ENCODE measurements at regions of chr5 and their contacts with region 1.

Region 1: GRCh38 chr5:72523960-72524582 is 16.9 kb upstream of the ZNF366 start:
- DNase-seq: no peak
- H3K4me3 ChIP-seq: no peak overlapping the region
- H3K27ac ChIP-seq: no peak overlapping the region
- H3K4me1 ChIP-seq: no peaks in the 10 kb centered on the region
- H3K27me3 ChIP-seq: no peaks in the 10 kb centered on the region
- CTCF ChIP-seq: peak; percentile 42

Region 2: DNA sequence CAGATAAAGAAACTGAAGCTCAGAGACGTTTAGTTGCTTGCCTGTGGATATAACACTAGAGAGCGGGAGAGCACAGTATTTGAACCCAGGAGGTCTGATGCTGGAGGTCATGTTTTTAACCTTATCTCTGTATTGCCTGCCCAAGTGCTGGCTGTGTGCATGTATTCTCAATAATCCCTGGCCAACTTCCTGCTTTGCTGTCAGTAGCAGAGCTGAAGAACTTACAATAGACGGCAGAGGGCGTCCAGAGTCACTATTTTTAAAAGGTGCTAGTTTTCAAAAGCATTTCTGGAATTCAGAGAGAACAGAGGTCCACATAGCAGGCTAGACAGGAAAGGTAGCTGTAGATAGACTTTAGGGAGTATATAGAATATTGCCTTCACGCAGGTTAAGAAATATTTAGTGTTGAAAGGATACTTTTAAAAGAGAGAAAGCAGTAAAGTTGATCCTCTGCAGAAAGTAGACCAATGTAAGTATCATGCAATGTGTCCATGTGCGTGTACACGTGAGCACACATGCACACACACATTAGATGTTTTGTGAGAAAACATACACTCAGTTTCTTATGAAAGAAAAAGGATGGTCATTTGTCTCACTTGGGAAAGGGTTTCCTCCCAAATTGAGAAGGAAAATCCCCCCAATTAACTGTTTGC is 157.6 kb before region 1 on chr5:
- intact Hi-C with region 1: loop called (anchors 5 kb)
- DNase-seq: peak; percentile 69
- H3K4me3 ChIP-seq: no peak overlapping the region
- H3K27ac ChIP-seq: no peak overlapping the region
- H3K4me1 ChIP-seq: no peaks in the 10 kb centered on the region
- H3K27me3 ChIP-seq: no peaks in the 10 kb centered on the region
- CTCF ChIP-seq: peak; percentile 59

Region 3: GRCh38 chr5:72378636-72379290 is 145.3 kb before region 1 on chr5:
- intact Hi-C with region 1: loop called (anchors 5 kb)
- DNase-seq: no peak
- H3K4me3 ChIP-seq: no peak overlapping the region
- H3K27ac ChIP-seq: no peak overlapping the region
- H3K4me1 ChIP-seq: no peaks in the 10 kb centered on the region
- H3K27me3 ChIP-seq: no peaks in the 10 kb centered on the region
- CTCF ChIP-seq: no peak

Measured in colonic mucosa (tissue), 4 donors.